Transverse colon (tissue), 4 donors: ENCODE measurements at regions of chr17 and their contacts with region 1.

Region 1: GRCh38 chr17:10618202-10618635 is 38.9 kb downstream of the MYH3 start:
- DNase-seq: peak; percentile 68
- H3K4me3 ChIP-seq: no peak overlapping the region
- H3K27ac ChIP-seq: no peak overlapping the region
- H3K4me1 ChIP-seq: no peaks in the 10 kb centered on the region
- H3K27me3 ChIP-seq: no peaks in the 10 kb centered on the region
- CTCF ChIP-seq: peak; percentile 73 to 82 (median 76)
- EP300 ChIP-seq: no peak
- POLR2A ChIP-seq: no peak

Region 2: GRCh38 chr17:9924735-9925191 is 693.5 kb before region 1 on chr17:
- in situ Hi-C with region 1: loop called in 2 of 4 experiments (anchors 10 to 25 kb)
- intact Hi-C with region 1: loop called (anchors 10 kb)
- DNase-seq: no peak
- H3K4me3 ChIP-seq: no peak overlapping the region
- H3K27ac ChIP-seq: no peak overlapping the region
- H3K4me1 ChIP-seq: peaks cover 0 to 3% (median 0%) of the 10 kb centered on the region in 4 donors
- H3K27me3 ChIP-seq: no peaks in the 10 kb centered on the region
- CTCF ChIP-seq: peak; percentile 70 to 89 (median 75)
- EP300 ChIP-seq: no peak
- POLR2A ChIP-seq: no peak

Region 3: GRCh38 chr17:10327640-10328039 is 290.6 kb before region 1 on chr17:
- in situ Hi-C with region 1: loop called (anchors 5 to 10 kb)
- intact Hi-C with region 1: no loop called
- DNase-seq: peak; percentile 84
- H3K4me3 ChIP-seq: no peak overlapping the region
- H3K27ac ChIP-seq: no peak overlapping the region
- H3K4me1 ChIP-seq: no peaks in the 10 kb centered on the region
- H3K27me3 ChIP-seq: no peaks in the 10 kb centered on the region
- CTCF ChIP-seq: peak; percentile 87 to 96 (median 93)
- EP300 ChIP-seq: no peak
- POLR2A ChIP-seq: no peak

Region 4: GRCh38 chr17:10394201-10394887 is 223.9 kb before region 1 on chr17:
- in situ Hi-C with region 1: no loop called
- intact Hi-C with region 1: no loop called
- DNase-seq: no peak
- H3K4me3 ChIP-seq: no peak overlapping the region
- H3K27ac ChIP-seq: no peak overlapping the region
- H3K4me1 ChIP-seq: no peaks in the 10 kb centered on the region
- H3K27me3 ChIP-seq: no peaks in the 10 kb centered on the region
- CTCF ChIP-seq: no peak
- EP300 ChIP-seq: no peak
- POLR2A ChIP-seq: no peak

Region 5: GRCh38 chr17:10513299-10514067 is 104.7 kb before region 1 on chr17:
- in situ Hi-C with region 1: loop called in 1 of 4 experiments (anchors 25 kb)
- intact Hi-C with region 1: no loop called
- DNase-seq: no peak
- H3K4me3 ChIP-seq: no peak overlapping the region
- H3K27ac ChIP-seq: no peak overlapping the region
- H3K4me1 ChIP-seq: no peaks in the 10 kb centered on the region
- H3K27me3 ChIP-seq: no peaks in the 10 kb centered on the region
- CTCF ChIP-seq: no peak
- EP300 ChIP-seq: no peak
- POLR2A ChIP-seq: no peak